ENCODE measurements at regions of chr1 and their contacts with region 1.

Region 1: DNA sequence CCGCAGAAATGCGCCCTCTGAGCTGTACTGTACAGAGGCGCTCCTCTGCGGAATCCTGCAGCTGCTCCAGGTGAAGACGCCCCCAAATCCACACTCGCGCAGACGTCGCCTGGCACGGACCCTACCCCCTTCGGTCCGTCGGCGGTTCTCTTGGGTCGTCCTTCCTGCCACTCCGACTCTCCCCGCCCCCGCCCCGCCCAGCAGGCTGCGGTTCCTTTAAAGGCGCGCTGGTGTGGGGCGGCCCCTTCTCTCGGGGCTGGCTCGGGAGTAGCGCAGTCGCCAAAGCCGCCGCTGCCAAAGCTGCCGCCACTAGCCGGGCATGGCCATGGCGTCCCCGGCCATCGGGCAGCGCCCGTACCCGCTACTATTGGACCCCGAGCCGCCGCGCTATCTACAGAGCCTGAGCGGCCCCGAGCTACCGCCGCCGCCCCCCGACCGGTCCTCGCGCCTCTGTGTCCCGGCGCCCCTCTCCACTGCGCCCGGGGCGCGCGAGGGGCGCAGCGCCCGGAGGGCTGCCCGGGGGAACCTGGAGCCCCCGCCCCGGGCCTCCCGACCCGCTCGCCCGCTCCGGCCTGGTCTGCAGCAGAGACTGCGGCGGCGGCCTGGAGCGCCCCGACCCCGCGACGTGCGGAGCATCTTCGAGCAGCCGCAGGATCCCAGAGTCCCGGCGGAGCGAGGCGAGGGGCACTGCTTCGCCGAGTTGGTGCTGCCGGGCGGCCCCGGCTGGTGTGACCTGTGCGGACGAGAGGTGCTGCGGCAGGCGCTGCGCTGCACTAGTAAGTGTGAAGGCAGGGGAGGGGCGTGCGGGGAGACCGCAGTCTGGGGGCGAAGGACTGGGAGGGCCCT is at the start of gene RASSF5:
- DNase-seq: peak; percentile 40 to 77 (median 68)
- H3K4me3 ChIP-seq: peak within 1 kb of the TSS; percentile 42 to 76 (median 61)
- H3K27ac ChIP-seq: no peak within 1 kb of the TSS
- H3K4me1 ChIP-seq: peaks cover 0 to 38% (median 31%) of the 10 kb centered on the region in 4 experiments
- H3K27me3 ChIP-seq: peaks cover 0 to 51% (median 20%) of the 10 kb centered on the region in 5 experiments

Region 2: DNA sequence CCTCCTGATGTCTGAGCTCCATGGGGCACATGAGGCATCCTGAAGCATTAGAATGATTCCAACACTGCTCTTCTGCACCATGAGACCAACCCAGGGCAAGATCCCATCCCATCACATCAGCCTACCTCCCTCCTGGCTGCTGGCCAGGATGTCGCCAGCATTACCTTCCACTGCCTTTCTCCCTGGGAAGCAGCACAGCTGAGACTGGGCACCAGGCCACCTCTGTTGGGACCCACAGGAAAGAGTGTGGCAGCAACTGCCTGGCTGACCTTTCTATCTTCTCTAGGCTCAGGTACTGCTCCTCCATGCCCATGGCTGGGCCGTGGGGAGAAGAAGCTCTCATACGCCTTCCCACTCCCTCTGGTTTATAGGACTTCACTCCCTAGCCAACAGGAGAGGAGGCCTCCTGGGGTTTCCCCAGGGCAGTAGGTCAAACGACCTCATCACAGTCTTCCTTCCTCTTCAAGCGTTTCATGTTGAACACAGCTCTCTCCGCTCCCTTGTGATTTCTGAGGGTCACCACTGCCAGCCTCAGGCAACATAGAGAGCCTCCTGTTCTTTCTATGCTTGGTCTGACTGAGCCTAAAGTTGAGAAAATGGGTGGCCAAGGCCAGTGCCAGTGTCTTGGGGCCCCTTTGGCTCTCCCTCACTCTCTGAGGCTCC is 11.2 kb before region 1 on chr1:
- CTCF ChIA-PET with region 1: interaction called, 14 read pairs
- POLR2A ChIA-PET with region 1: interaction called, 3 read pairs
- DNase-seq: no peak
- H3K4me3 ChIP-seq: no peak overlapping the region
- H3K27ac ChIP-seq: no peak overlapping the region
- H3K4me1 ChIP-seq: peaks cover 4 to 19% (median 15%) of the 10 kb centered on the region in 4 experiments
- H3K27me3 ChIP-seq: no peaks in the 10 kb centered on the region

Region 3: GRCh38 chr1:206521143-206521542 is 13.6 kb after region 1 on chr1:
- CTCF ChIA-PET with region 1: interaction called, 15 read pairs
- POLR2A ChIA-PET with region 1: no interaction called
- DNase-seq: no peak
- H3K4me3 ChIP-seq: no peak overlapping the region
- H3K27ac ChIP-seq: no peak overlapping the region
- H3K4me1 ChIP-seq: peaks cover 0 to under 1% (median 0%) of the 10 kb centered on the region in 4 experiments
- H3K27me3 ChIP-seq: peaks cover 0 to 3% (median 0%) of the 10 kb centered on the region in 5 experiments